ENCODE measurements at regions of chr12 and their contacts with region 1.

Region 1: DNA sequence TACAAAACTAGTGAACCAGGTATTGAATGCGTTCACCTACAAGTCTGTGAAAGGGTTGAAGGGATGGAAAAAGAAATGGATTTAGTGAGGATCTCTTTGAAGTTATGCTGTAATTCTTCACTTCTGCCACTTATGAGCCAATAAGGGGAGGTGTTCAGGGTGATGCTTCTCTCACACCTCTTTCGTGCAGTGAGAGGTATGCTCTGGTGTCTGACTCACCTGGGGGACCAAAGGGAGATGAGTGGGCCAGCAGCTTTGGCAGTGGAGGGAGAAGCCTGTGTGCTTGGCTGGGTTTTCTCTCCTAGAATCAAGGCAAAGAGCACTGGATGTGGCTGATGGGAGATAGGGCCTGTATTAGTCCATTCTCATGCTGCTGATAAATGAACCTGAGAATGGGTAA is 45.4 kb downstream of the E2F7 start:
- DNase-seq: no peak
- ATAC-seq: no peak
- H3K4me3 ChIP-seq: no peak overlapping the region
- H3K27ac ChIP-seq: no peak overlapping the region
- H3K4me1 ChIP-seq: no peaks in the 10 kb centered on the region
- CTCF ChIP-seq: no peak
- EP300 ChIP-seq: no peak
- POLR2A ChIP-seq: no peak
- RAD21 ChIP-seq: no peak

Region 2: DNA sequence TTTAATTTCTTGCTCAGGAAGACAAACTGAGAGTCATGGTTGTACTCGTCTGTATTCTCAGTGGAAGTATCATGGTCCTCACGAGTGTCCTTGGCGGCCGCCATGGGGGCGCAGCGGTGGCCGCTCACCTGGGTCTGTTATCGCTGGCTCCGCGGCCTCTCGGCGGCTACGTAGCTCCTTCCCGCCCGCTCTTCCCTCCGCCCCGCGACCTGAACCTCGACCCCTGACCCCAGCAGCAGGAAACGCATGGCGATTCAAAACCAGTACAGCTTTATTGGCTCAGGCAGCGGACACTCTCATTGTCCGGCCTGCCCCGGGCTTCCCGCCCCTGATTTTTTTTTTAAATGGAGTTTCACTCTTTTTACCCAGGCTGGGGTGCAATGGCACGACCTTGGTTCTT is 35.4 kb before region 1 on chr12:
- CTCF ChIA-PET with region 1: no interaction called
- POLR2A ChIA-PET with region 1: no interaction called
- DNase-seq: no peak
- ATAC-seq: no peak
- H3K4me3 ChIP-seq: no peak overlapping the region
- H3K27ac ChIP-seq: no peak overlapping the region
- H3K4me1 ChIP-seq: no peaks in the 10 kb centered on the region
- CTCF ChIP-seq: no peak
- EP300 ChIP-seq: no peak
- POLR2A ChIP-seq: no peak
- RAD21 ChIP-seq: no peak

Region 3: GRCh38 chr12:77001181-77001758 is 18.6 kb before region 1 on chr12:
- CTCF ChIA-PET with region 1: interaction called, 11 read pairs
- POLR2A ChIA-PET with region 1: no interaction called
- DNase-seq: no peak
- ATAC-seq: 0 out of 6 replicates have a peak, but pooled peaks of 1 of the 2 experiments have one; percentile 20
- H3K4me3 ChIP-seq: no peak overlapping the region
- H3K27ac ChIP-seq: no peak overlapping the region
- H3K4me1 ChIP-seq: no peaks in the 10 kb centered on the region
- CTCF ChIP-seq: no peak
- EP300 ChIP-seq: no peak
- POLR2A ChIP-seq: no peak
- RAD21 ChIP-seq: no peak

Region 4: GRCh38 chr12:77040231-77040630 is 20.3 kb after region 1 on chr12:
- CTCF ChIA-PET with region 1: no interaction called
- POLR2A ChIA-PET with region 1: no interaction called
- DNase-seq: no peak
- ATAC-seq: no peak
- H3K4me3 ChIP-seq: no peak overlapping the region
- H3K27ac ChIP-seq: no peak overlapping the region
- H3K4me1 ChIP-seq: no peaks in the 10 kb centered on the region
- CTCF ChIP-seq: no peak
- EP300 ChIP-seq: no peak
- POLR2A ChIP-seq: no peak
- RAD21 ChIP-seq: no peak

Region 5: GRCh38 chr12:77070382-77070781 is 50.5 kb after region 1 on chr12:
- CTCF ChIA-PET with region 1: no interaction called
- POLR2A ChIA-PET with region 1: no interaction called
- DNase-seq: no peak
- ATAC-seq: no peak
- H3K4me3 ChIP-seq: no peak overlapping the region
- H3K27ac ChIP-seq: no peak overlapping the region
- H3K4me1 ChIP-seq: peaks cover 4% of the 10 kb centered on the region; the same call in 2 of the 3 replicates
- CTCF ChIP-seq: no peak
- EP300 ChIP-seq: no peak
- POLR2A ChIP-seq: no peak
- RAD21 ChIP-seq: no peak